Activated CD4-positive, alpha-beta memory T cell treated with anti-CD3 and anti-CD28 coated beads for 36 hours (primary cell): ENCODE measurements at regions of chr4 and their contacts with region 1.

Region 1: DNA sequence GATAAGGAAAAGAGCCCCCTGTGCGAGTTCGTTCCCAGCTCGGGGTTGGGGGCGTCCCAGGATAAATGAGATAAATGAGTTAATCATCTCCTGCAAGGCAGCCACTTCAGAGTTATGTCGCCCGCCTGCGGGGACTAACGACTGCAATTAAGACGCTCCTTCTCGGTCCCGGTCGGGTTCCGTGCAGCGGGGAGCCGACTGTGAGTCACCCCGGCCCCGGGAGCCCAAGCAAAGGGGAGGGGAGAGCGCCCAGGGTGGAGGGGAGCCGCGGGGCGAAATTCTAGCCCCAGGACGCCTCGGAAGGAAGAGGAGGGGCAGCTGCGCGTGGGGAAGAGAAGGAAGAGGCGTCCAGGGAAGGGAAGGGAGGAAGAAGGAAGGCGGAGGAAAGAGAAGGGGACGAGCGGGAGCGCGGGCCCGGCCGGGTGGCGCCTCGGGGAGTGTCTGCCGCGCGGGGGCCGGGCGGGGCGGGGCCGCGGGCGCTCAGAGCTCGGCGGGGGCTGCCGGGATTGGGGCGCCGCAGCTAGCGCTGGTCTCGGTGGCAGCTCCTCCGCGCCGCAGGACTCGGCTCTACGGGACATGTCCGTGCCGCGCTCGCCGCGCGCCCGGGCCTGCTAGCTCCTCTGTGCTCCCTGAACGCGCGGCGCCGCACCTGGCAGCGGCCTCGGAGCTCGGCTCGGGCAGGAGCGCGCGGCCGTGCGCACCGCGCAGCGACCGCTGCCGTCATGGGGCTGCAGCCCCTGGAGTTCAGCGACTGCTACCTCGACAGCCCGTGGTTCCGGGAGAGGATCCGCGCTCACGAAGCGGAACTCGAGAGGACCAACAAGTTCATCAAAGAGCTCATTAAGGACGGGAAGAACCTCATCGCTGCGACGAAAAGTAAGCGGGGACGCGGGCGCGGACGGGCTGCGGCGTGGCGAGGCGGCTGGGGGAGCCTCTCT is at the start of gene ARHGAP10:
- DNase-seq: peak; percentile 78
- H3K4me3 Mint-ChIP-seq: peak within 1 kb of the TSS; percentile 83
- H3K27ac Mint-ChIP-seq: peak within 1 kb of the TSS; percentile 77
- H3K4me1 Mint-ChIP-seq: peaks cover 42% of the 10 kb centered on the region
- H3K27me3 Mint-ChIP-seq: no peaks in the 10 kb centered on the region
- total RNA-seq, gene ARHGAP10: 7.1 to 8.0 TPM

Region 2: DNA sequence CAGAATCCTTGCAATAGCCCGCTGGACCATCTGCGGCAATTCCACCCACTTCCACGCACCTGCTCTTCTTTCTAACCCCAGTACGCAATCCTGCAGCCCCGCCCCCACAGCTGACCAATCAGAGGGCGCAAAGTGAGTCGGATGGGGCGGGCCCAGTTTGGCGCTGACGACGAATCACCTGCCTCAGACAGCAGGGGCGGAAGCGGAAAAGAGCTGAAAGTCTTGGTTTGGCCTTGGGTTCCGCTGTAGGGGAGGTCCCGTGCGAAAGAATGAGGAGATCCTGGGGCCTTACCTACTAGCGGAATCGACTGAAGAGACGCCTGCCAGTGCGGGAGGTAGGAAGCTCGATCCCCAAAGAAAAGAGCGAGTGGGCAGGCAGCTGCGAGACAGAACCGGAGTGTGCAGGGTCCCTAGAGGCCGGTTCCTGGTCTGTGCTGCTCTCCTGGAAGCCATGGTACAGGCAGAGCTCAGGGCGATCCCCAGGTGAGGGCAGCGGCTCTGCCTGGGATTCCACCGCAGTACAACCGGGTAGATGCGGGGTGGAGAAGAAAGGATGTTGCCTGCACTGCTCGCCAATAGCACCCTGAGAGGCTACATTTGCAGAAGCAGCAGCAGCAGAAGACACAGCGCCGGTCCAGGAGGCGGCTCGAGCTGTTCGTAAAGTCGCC is 114.5 kb before region 1 on chr4 and contains the start of gene TMEM184C:
- CTCF ChIA-PET with region 1: interaction called, 5 read pairs
- POLR2A ChIA-PET with region 1: interaction called, 8 read pairs
- intact Hi-C with region 1: loop called (anchors 1 kb)
- DNase-seq: peak; percentile 99
- H3K4me3 Mint-ChIP-seq: peak within 1 kb of the TSS; percentile 100
- H3K27ac Mint-ChIP-seq: peak within 1 kb of the TSS; percentile 98
- H3K4me1 Mint-ChIP-seq: peaks cover 25% of the 10 kb centered on the region
- H3K27me3 Mint-ChIP-seq: no peaks in the 10 kb centered on the region
- total RNA-seq, gene TMEM184C: 15.5 to 15.7 TPM

Region 3: DNA sequence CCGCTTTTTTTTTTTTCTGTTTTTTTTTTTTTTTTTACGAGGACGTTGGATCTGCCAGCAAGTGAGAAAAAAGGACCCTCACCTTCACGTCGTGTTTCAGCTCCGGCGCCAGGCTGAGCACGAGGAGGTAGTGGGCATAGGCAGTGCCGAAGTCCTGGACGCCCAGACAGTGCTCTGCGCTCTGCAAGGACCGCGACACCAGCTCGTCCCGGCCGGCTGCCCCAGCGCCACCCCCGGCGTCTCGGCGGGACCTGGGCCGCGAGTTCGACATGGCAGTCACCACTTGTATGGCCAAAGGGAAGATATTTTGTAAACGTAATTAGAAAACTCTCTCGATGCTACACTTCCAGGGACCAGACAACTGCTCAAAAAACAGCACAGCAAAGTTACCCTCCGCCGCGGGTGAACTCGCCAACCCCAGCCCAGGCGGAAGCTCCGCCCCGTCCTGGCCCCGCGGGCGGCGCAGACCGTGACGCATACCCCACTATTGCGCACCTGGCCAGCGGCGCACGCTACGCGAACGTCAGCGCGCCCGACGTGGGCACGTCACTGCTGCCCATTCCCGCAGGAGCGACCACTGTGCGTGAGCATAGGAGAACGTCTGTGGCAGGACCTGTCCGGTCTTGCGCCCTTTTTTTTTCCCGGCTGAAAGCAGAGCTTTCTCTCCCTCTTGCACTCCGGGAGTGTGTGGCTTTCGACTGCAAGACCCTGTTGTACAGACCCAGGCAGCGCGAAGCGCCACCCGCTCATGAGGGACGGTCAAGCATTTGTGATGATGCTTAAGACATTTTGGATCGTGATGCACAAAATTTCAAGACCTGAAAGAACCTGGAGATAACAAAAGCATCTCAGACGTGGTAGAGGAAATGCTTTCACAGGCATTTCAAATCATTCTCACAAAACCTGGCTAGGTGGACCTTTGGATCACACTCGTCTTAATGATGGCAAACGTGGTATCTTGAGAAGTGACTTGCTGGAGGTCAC is 47.8 kb before region 1 on chr4 and contains the start of gene PRMT9:
- CTCF ChIA-PET with region 1: interaction called, 7 read pairs
- POLR2A ChIA-PET with region 1: interaction called, 10 read pairs
- intact Hi-C with region 1: loop called (anchors 1 kb)
- DNase-seq: peak; percentile 93
- H3K4me3 Mint-ChIP-seq: peak within 1 kb of the TSS; percentile 85
- H3K27ac Mint-ChIP-seq: peak within 1 kb of the TSS; percentile 88
- H3K4me1 Mint-ChIP-seq: peaks cover 24% of the 10 kb centered on the region
- H3K27me3 Mint-ChIP-seq: no peaks in the 10 kb centered on the region
- total RNA-seq, gene PRMT9: 7.9 to 8.3 TPM

Region 4: GRCh38 chr4:147707865-147708672 is 23.8 kb before region 1 on chr4:
- CTCF ChIA-PET with region 1: interaction called, 9 read pairs
- POLR2A ChIA-PET with region 1: no interaction called
- intact Hi-C with region 1: loop called (anchors 2 kb)
- DNase-seq: peak; percentile 61
- H3K4me3 Mint-ChIP-seq: no peak overlapping the region
- H3K27ac Mint-ChIP-seq: no peak overlapping the region
- H3K4me1 Mint-ChIP-seq: no peaks in the 10 kb centered on the region
- H3K27me3 Mint-ChIP-seq: no peaks in the 10 kb centered on the region

Region 5: GRCh38 chr4:147793569-147794313 is 61.9 kb after region 1 on chr4:
- CTCF ChIA-PET with region 1: interaction called, 3 read pairs
- POLR2A ChIA-PET with region 1: interaction called, 7 read pairs
- intact Hi-C with region 1: loop called (anchors 1 kb)
- DNase-seq: peak; percentile 21
- H3K4me3 Mint-ChIP-seq: peak overlapping the region; percentile 16
- H3K27ac Mint-ChIP-seq: peak overlapping the region; percentile 50
- H3K4me1 Mint-ChIP-seq: peaks cover 37% of the 10 kb centered on the region
- H3K27me3 Mint-ChIP-seq: no peaks in the 10 kb centered on the region

Region 6: GRCh38 chr4:147837435-147837834 is 105.6 kb after region 1 on chr4:
- CTCF ChIA-PET with region 1: interaction called, 3 read pairs
- POLR2A ChIA-PET with region 1: no interaction called
- intact Hi-C with region 1: loop called (anchors 2 kb)
- DNase-seq: no peak
- H3K4me3 Mint-ChIP-seq: no peak overlapping the region
- H3K27ac Mint-ChIP-seq: no peak overlapping the region
- H3K4me1 Mint-ChIP-seq: peaks cover 22% of the 10 kb centered on the region
- H3K27me3 Mint-ChIP-seq: no peaks in the 10 kb centered on the region

Region 7: DNA sequence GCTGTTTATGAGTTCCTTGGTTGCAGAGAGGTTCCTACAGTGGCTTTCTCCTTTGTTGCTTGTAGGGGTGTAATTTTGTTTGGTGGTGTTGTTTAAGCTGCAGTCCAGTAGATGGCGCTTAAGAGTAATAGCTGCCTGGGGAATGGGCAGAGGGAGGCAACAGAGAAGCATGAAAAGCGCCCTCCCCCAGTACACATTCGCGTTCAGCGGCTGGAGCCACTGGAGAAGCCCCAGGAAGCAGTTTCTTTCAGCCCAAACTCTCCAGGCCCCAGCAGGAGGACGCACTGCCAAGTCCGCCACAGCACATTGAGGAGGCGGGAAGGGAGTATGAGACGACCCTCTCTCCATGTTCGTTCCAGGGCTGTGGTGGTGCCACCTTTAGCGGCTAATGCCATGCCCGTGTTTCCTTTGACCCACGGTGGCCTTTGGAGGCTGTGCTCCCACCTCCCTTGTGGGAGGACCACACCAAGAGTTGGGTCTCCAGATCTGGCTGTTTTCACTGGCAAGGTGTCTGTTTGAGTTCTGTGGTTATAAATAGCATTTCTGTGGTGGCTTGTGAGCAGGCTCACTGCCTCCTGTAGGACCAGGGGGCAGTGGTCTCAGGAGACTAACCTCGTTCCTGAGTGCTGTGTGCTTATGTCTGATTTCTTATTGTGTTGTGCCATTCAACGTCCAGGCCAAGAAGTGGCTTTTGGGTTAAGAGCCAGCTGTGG is 252.4 kb after region 1 on chr4:
- CTCF ChIA-PET with region 1: no interaction called
- POLR2A ChIA-PET with region 1: no interaction called
- intact Hi-C with region 1: no loop called
- DNase-seq: peak; percentile 25
- H3K4me3 Mint-ChIP-seq: no peak overlapping the region
- H3K27ac Mint-ChIP-seq: no peak overlapping the region
- H3K4me1 Mint-ChIP-seq: peaks cover 16% of the 10 kb centered on the region
- H3K27me3 Mint-ChIP-seq: no peaks in the 10 kb centered on the region